ENCODE measurements at regions of chr12 and their contacts with region 1.

Region 1: GRCh38 chr12:55314043-55314442 is at the start of gene OR6C1:
- DNase-seq: no peak
- H3K4me3 ChIP-seq: no peak within 1 kb of the TSS
- H3K27ac ChIP-seq: no peak within 1 kb of the TSS
- H3K4me1 ChIP-seq: no peaks in the 10 kb centered on the region
- H3K27me3 ChIP-seq: peaks cover 30% of the 10 kb centered on the region
- CTCF ChIP-seq: no peak
- total RNA-seq, gene OR6C1: not detected in 2 replicates

Region 2: DNA sequence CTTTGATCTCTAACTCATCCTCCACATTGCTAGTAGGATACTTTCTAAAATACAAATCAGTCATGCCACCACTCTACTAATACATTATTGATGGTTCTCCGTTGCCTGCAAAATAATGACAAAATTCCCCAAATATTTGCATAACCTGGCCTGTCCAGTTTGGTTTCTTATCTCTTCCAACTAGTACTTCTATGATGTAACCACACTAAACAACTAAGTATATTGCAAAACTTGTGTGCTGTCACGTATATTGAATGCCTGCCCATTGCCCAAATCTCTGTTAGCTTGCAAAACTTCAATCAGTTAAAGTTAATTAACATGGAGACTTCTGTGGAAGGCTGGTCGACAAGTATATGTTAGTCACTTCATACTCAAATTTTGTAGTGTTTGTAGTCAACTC is 63.1 kb before region 1 on chr12:
- CTCF ChIA-PET with region 1: no interaction called
- POLR2A ChIA-PET with region 1: no interaction called
- intact Hi-C with region 1: loop called (anchors 10 kb)
- DNase-seq: no peak
- H3K4me3 ChIP-seq: no peak overlapping the region
- H3K27ac ChIP-seq: no peak overlapping the region
- H3K4me1 ChIP-seq: no peaks in the 10 kb centered on the region
- H3K27me3 ChIP-seq: peaks cover 47% of the 10 kb centered on the region
- CTCF ChIP-seq: no peak

Region 3: GRCh38 chr12:55624056-55624455 is 310.0 kb after region 1 on chr12:
- CTCF ChIA-PET with region 1: no interaction called
- POLR2A ChIA-PET with region 1: no interaction called
- intact Hi-C with region 1: no loop called
- DNase-seq: no peak
- H3K4me3 ChIP-seq: no peak overlapping the region
- H3K27ac ChIP-seq: no peak overlapping the region
- H3K4me1 ChIP-seq: no peaks in the 10 kb centered on the region
- H3K27me3 ChIP-seq: peaks cover 49% of the 10 kb centered on the region
- CTCF ChIP-seq: no peak

Measured in A673 (cell line).